ENCODE measurements at regions of chr17 and their contacts with region 1.

Region 1: GRCh38 chr17:45228763-45229539 is 7.3 kb downstream of the FMNL1 start:
- DNase-seq: peak; percentile 56 to 93 (median 79)
- ATAC-seq: peak; percentile 57
- H3K4me3 ChIP-seq: peak overlapping the region; percentile 99
- H3K4me3 Mint-ChIP-seq: peak overlapping the region; percentile 87
- H3K27ac ChIP-seq: peak overlapping the region; percentile 98 to 99
- H3K27ac Mint-ChIP-seq: peak overlapping the region; percentile 100
- H3K4me1 ChIP-seq: peaks cover 98% of the 10 kb centered on the region
- H3K4me1 Mint-ChIP-seq: peaks cover 79% of the 10 kb centered on the region
- H3K27me3 ChIP-seq: no peaks in the 10 kb centered on the region
- H3K27me3 Mint-ChIP-seq: no peaks in the 10 kb centered on the region
- CTCF ChIP-seq: no peak

Region 2: DNA sequence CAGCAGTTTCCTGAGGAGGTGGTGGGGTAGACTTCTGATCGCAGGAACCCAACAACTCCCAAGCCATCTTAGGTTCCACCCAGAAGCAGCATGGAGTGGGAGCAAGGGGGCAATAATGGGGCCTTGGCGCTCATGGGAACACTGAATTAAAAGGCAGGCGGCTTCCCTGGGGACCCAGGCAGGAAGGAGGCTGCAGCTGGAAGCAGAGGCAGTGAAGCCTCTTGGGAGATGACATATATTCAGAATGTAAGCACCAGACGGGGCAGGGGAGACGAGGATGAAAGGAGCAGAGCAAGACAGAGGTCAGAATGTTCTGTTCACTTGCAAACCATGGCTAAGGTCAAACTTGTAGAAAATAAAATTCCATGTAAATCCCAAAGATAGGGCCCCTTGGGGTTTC is 378.3 kb before region 1 on chr17:
- CTCF ChIA-PET with region 1: no interaction called
- POLR2A ChIA-PET with region 1: no interaction called
- intact Hi-C with region 1: no loop called
- DNase-seq: no peak
- ATAC-seq: no peak
- H3K4me3 ChIP-seq: no peak overlapping the region
- H3K4me3 Mint-ChIP-seq: no peak overlapping the region
- H3K27ac ChIP-seq: no peak overlapping the region
- H3K27ac Mint-ChIP-seq: no peak overlapping the region
- H3K4me1 ChIP-seq: no peaks in the 10 kb centered on the region
- H3K4me1 Mint-ChIP-seq: no peaks in the 10 kb centered on the region
- H3K27me3 ChIP-seq: no peaks in the 10 kb centered on the region
- H3K27me3 Mint-ChIP-seq: no peaks in the 10 kb centered on the region
- CTCF ChIP-seq: no peak

Region 3: DNA sequence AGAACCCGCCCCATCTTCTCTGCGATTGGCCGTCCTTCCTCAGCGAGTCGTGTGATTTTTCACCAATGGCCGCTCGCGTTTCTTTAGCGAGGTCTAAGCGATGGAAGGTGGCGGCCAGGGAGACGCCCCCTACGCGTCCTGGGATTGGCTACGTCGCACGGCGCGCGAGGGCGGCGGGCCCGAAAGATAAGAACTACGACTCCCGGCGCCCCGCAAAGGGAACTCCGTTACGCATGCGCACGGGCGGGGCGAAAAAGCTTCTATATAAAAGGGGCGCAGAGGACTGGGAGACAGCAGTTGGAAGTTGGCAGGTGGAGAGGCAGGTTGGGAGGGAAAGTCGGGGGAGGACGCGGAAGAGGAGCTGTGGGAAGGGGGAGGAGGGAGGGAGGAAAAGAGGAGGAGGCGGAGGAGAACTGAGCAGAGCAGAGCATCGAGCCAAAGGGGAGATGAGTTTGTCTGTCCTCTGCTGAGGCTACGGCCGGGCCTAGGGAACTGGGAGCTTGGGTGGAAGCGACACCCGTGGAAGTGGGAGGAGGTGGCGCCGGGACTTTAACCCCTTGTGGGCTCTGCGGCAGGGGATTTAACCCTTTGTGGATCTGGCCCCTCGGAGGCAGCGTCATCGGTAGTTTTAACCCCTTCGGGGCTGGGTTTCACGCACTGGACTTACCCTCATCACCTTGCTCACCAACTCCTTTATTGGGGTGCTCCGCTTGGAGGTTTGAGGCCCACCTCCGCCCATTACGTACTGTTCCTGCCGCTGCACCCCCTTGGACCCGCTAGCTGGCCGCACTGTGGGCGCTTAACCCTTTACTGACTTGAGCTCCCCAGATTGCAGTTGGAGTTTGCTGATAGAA is 80.5 kb before region 1 on chr17 and contains the start of gene HEXIM1:
- CTCF ChIA-PET with region 1: interaction called, 17 read pairs
- POLR2A ChIA-PET with region 1: interaction called, 116 read pairs
- intact Hi-C with region 1: no loop called
- DNase-seq: peak; percentile 98 to 100 (median 99)
- ATAC-seq: peak; percentile 78
- H3K4me3 ChIP-seq: peak within 1 kb of the TSS; percentile 94
- H3K4me3 Mint-ChIP-seq: peak within 1 kb of the TSS; percentile 94
- H3K27ac ChIP-seq: peak within 1 kb of the TSS; percentile 93 to 97
- H3K27ac Mint-ChIP-seq: peak within 1 kb of the TSS; percentile 99
- H3K4me1 ChIP-seq: peaks cover 71% of the 10 kb centered on the region
- H3K4me1 Mint-ChIP-seq: peaks cover 69% of the 10 kb centered on the region
- H3K27me3 ChIP-seq: no peaks in the 10 kb centered on the region
- H3K27me3 Mint-ChIP-seq: peaks cover 8% of the 10 kb centered on the region
- CTCF ChIP-seq: no peak
- total RNA-seq, gene HEXIM1: 50.5 to 50.9 TPM

Region 4: GRCh38 chr17:45172454-45173286 is 56.3 kb before region 1 on chr17:
- CTCF ChIA-PET with region 1: no interaction called
- POLR2A ChIA-PET with region 1: interaction called, 10 read pairs
- intact Hi-C with region 1: no loop called
- DNase-seq: peak; percentile 11 to 75 (median 52)
- ATAC-seq: peak; percentile 83
- H3K4me3 ChIP-seq: peak overlapping the region; percentile 45
- H3K4me3 Mint-ChIP-seq: peak overlapping the region; percentile 83
- H3K27ac ChIP-seq: peak overlapping the region in 1 of 2 donors; percentile 44
- H3K27ac Mint-ChIP-seq: peak overlapping the region; percentile 76
- H3K4me1 ChIP-seq: peaks cover 23% of the 10 kb centered on the region
- H3K4me1 Mint-ChIP-seq: peaks cover 26% of the 10 kb centered on the region
- H3K27me3 ChIP-seq: no peaks in the 10 kb centered on the region
- H3K27me3 Mint-ChIP-seq: no peaks in the 10 kb centered on the region
- CTCF ChIP-seq: peak; percentile 46

Region 5: GRCh38 chr17:45261577-45262515 is 32.9 kb after region 1 on chr17 and contains the start of gene SPATA32:
- CTCF ChIA-PET with region 1: interaction called, 6 read pairs
- POLR2A ChIA-PET with region 1: interaction called, 23 read pairs
- intact Hi-C with region 1: loop called in 1 of 2 experiments (anchors 5 kb)
- DNase-seq: peak; percentile 38 to 80 (median 66)
- ATAC-seq: peak; percentile 88
- H3K4me3 ChIP-seq: peak within 1 kb of the TSS; percentile 75
- H3K4me3 Mint-ChIP-seq: peak within 1 kb of the TSS; percentile 89
- H3K27ac ChIP-seq: peak within 1 kb of the TSS; percentile 65
- H3K27ac Mint-ChIP-seq: peak within 1 kb of the TSS; percentile 84
- H3K4me1 ChIP-seq: peaks cover 37% of the 10 kb centered on the region
- H3K4me1 Mint-ChIP-seq: peaks cover 40% of the 10 kb centered on the region
- H3K27me3 ChIP-seq: no peaks in the 10 kb centered on the region
- H3K27me3 Mint-ChIP-seq: no peaks in the 10 kb centered on the region
- CTCF ChIP-seq: no peak
- total RNA-seq, gene SPATA32: 0.20 to 0.27 TPM

Region 6: DNA sequence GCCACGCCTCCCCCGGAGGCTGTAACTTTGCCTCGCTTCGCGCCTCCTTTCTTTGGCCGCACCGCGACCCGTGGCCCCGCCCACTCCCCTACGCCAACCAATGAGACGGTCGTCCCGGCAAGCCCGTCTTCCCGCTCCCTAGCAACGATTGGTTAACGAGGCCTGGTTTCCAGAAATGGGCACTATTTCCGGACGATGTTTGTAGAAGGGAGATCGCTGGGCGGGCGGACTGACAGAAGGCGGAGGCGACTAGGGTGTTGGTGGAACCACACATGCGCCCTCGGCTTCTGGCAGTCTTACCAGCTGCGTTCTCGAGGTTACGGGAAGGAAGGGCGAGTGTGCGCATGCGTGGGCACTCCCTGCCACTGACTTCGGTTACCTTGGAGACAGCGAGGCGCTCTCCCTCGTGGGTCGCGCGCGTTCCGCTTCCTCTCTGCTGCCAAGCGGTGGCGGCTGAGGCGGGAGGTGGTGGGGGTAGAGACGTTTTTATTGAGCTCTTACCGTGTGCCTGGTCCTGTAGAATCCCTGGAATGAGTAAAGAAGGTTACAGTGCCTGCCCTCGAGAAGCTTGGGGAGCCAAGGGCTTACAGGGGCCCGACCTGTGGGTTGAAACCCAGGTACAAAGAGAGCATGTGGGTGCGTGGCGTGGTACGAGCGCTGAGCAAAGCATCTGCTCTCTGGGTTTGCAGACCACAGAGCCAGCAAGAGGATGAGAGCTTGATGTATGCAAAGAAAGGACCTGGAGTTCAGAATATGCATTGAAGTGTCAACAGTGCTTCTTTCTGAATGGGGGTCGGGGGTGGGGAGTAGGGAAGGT is 88.4 kb after region 1 on chr17:
- CTCF ChIA-PET with region 1: no interaction called
- POLR2A ChIA-PET with region 1: interaction called, 61 read pairs
- intact Hi-C with region 1: loop called in 1 of 2 experiments (anchors 5 kb)
- DNase-seq: peak; percentile 93 to 100 (median 100)
- ATAC-seq: peak; percentile 83
- H3K4me3 ChIP-seq: peak overlapping the region; percentile 88
- H3K4me3 Mint-ChIP-seq: peak overlapping the region; percentile 98
- H3K27ac ChIP-seq: peak overlapping the region; percentile 51 to 79
- H3K27ac Mint-ChIP-seq: peak overlapping the region; percentile 85
- H3K4me1 ChIP-seq: peaks cover 81% of the 10 kb centered on the region
- H3K4me1 Mint-ChIP-seq: peaks cover 88% of the 10 kb centered on the region
- H3K27me3 ChIP-seq: no peaks in the 10 kb centered on the region
- H3K27me3 Mint-ChIP-seq: no peaks in the 10 kb centered on the region
- CTCF ChIP-seq: no peak

Region 7: DNA sequence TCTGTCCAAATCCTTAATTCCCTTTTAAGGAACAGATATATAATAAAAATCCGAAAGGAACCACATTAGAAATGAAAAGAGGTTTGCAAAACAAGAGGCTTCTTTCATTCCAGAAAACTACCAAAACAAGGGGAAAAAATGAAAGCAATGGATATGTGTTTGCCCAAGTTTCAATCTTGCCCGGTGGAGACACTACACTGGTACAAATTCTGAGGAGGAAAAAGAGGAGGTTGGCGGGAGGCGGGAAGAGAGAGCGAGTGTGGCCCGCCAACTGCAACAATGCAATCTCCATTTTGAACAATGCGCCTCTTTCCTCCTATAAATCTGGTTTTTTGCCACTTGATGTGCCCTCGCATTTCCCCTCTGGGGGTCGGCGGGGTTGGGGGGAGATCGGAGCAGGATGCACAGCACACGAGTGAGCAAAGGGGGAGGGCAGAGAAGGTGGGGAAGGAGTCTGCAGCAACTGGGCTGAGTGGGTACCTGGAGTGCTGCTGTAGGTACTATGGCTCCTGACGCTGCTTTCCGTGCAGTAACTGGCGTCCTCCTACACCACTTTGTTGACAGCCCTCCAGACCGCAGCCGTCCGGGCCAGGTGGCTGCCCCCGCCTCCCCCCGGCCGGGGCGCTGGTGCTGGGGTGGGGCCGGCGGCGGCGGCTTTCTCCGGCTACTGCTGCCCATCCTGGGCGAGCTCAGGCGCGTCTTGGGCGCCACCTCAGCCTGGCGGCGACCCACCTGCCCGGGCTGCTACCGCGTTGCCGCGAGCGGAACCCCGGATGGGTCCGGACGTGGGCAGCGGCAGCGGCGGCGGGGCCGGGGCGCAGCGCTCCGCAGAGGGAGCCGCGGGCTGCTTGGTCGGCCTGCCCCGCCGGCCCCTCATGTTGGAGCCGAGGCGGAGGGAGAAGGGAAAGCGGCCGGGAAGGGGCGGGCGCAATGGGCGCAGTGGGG is 355.4 kb after region 1 on chr17:
- CTCF ChIA-PET with region 1: no interaction called
- POLR2A ChIA-PET with region 1: interaction called, 3 read pairs
- intact Hi-C with region 1: loop called (anchors 5 kb)
- DNase-seq: peak; percentile 56 to 89 (median 76)
- ATAC-seq: peak; percentile 54
- H3K4me3 ChIP-seq: peak overlapping the region; percentile 78
- H3K4me3 Mint-ChIP-seq: peak overlapping the region; percentile 99
- H3K27ac ChIP-seq: peak overlapping the region; percentile 83
- H3K27ac Mint-ChIP-seq: peak overlapping the region; percentile 98
- H3K4me1 ChIP-seq: peaks cover 42% of the 10 kb centered on the region
- H3K4me1 Mint-ChIP-seq: peaks cover 38% of the 10 kb centered on the region
- H3K27me3 ChIP-seq: no peaks in the 10 kb centered on the region
- H3K27me3 Mint-ChIP-seq: no peaks in the 10 kb centered on the region
- CTCF ChIP-seq: no peak